Colonic mucosa (tissue), 4 donors: ENCODE measurements at regions of chr15 and their contacts with region 1.

Region 1: DNA sequence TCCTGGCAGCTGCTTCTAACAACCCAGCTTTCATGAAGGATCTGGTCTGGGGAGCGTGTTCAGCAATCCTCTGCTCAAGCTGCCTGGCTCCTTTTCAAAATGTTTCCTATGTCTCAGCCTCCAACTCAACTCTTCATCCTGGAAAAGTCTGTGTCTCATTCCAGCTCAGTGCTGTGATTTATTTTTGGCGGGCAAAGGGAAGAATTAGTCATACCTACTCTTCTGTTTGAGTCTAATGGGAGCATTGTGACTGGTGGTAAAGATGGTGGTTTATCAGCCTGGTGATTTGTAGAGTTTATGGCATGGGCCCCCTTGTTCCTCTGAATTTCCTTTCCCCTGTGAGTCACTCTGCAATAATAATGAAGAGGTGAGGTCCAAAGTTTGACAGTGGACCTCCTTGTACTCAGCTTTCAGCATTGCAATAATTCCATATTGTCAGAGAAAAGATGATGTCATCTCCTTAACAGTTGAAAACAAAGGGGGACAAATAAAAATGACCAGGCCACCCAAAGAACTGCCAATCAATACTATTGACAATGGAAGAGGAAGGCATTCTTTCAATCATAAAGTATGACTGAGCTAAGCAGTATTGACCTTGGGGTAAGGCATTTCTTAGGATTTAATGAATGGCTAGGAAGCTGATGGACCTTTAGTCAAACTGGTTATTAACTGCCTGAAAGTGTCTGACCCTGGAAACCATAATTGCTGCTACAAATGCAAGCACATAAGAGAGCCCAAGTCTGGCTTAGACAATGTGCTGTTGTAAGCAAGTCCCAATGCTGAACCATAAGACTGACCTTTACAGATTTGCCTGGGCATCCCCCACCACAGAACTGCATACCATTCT is 204.7 kb upstream of the MCTP2 start:
- DNase-seq: no peak
- H3K4me3 ChIP-seq: no peak overlapping the region
- H3K27ac ChIP-seq: no peak overlapping the region
- H3K4me1 ChIP-seq: no peaks in the 10 kb centered on the region
- H3K27me3 ChIP-seq: no peaks in the 10 kb centered on the region
- CTCF ChIP-seq: no peak

Region 2: GRCh38 chr15:94080418-94080817 is 53.7 kb after region 1 on chr15:
- intact Hi-C with region 1: no loop called
- DNase-seq: no peak
- H3K4me3 ChIP-seq: no peak overlapping the region
- H3K27ac ChIP-seq: no peak overlapping the region
- H3K4me1 ChIP-seq: no peaks in the 10 kb centered on the region
- H3K27me3 ChIP-seq: no peaks in the 10 kb centered on the region
- CTCF ChIP-seq: no peak

Region 3: GRCh38 chr15:94100863-94101262 is 74.2 kb after region 1 on chr15:
- intact Hi-C with region 1: loop called (anchors 5 kb)
- DNase-seq: no peak
- H3K4me3 ChIP-seq: no peak overlapping the region
- H3K27ac ChIP-seq: no peak overlapping the region
- H3K4me1 ChIP-seq: no peaks in the 10 kb centered on the region
- H3K27me3 ChIP-seq: no peaks in the 10 kb centered on the region
- CTCF ChIP-seq: no peak

Region 4: GRCh38 chr15:94125156-94125555 is 98.5 kb after region 1 on chr15:
- intact Hi-C with region 1: no loop called
- DNase-seq: no peak
- H3K4me3 ChIP-seq: no peak overlapping the region
- H3K27ac ChIP-seq: no peak overlapping the region
- H3K4me1 ChIP-seq: no peaks in the 10 kb centered on the region
- H3K27me3 ChIP-seq: no peaks in the 10 kb centered on the region
- CTCF ChIP-seq: no peak

Region 5: GRCh38 chr15:94135486-94136145 is 108.9 kb after region 1 on chr15:
- intact Hi-C with region 1: no loop called
- DNase-seq: no peak
- H3K4me3 ChIP-seq: no peak overlapping the region
- H3K27ac ChIP-seq: no peak overlapping the region
- H3K4me1 ChIP-seq: no peaks in the 10 kb centered on the region
- H3K27me3 ChIP-seq: no peaks in the 10 kb centered on the region
- CTCF ChIP-seq: no peak